RWPE1 (cell line): ENCODE measurements at regions of chrX and their contacts with region 1.

Region 1: DNA sequence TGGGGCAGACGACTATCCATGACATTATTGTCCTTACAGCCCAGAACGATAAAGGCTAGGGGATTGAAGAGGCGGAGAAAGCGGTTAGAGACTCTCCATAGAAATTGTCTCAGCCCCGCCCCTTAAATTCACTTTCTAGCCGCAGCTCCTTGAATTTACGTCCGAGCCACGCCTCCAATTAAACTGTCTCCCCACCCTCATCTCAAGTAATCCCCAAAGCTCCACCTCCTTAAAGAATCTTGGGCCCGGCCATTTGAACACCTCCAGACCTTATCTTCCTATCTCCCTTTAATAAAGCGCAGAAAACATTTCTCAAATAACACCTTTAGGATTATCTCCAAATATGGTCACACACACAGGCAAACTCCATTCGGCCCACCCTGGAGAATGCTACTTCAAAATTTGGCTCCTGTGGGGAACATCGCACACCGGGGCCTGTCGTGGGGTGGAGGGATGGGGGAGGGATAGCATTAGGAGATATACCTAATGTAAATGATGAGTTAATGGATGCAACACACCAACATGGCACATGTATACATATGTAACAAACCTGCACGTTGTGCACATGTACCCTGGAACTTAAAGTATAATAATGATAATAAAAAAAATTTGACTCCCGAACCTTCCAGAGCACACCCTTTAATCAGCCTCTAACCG is 7.2 kb upstream of the MAGIX start:
- DNase-seq: peak; percentile 70
- H3K27ac ChIP-seq: peak overlapping the region; percentile 94
- CTCF ChIP-seq: no peak

Region 2: GRCh38 chrX:49179358-49179757 is 24.0 kb after region 1 on chrX:
- CTCF ChIA-PET with region 1: no interaction called
- POLR2A ChIA-PET with region 1: interaction called, 12 read pairs
- DNase-seq: no peak
- H3K27ac ChIP-seq: peak overlapping the region; percentile 97
- CTCF ChIP-seq: no peak